Activated B cell treated with CpG ODN at 0.5 μM for 24 hours (primary cell): ENCODE measurements at regions of chr7 and their contacts with region 1.

Region 1: DNA sequence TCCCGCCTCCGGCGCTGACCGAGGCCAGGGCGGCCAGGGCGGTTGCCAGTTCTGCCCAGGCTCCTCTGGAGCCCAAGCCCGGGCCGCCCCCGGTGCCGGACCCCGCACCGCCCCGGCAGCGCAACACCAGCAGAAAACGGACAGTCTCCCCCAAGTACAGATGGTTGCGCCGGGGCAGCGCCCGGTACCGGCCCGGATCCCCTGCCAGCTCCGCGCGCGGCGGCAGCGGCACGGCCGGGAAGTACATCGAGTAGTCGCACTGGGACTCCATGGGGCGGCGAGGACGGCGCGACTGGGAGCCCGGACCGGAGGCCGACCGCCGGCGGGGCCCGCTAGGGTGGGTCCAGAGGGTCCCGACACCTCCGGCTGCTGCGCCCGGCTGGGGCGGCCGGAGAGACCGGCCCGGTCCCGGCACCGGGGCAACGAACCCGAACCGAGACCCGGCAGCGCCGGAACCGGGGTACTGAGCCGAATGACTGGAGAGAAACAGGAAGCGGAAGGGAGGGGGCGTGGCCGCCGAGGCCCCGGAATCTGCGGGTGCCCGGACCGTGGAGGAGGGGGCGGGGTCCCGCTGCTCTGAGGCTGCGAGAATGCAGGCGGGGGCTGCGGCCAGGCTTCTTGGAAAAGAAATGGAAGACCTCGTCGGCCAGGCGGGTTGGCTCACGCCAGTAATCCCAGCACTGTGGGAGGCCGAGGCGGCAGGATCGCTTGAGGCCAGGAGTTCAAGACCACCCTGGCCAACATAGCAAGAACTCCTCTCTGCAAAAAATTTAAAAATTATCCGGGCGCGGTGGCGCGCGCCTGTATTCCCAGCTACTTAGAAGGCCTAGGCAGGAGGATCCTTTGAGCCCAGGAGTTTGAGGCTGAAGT is at the start of gene TRAPPC14:
- DNase-seq: peak; percentile 93
- ATAC-seq: peak; percentile 89
- H3K4me3 Mint-ChIP-seq: peak within 1 kb of the TSS; percentile 85
- H3K27ac Mint-ChIP-seq: peak within 1 kb of the TSS; percentile 86
- H3K4me1 Mint-ChIP-seq: peaks cover 44% of the 10 kb centered on the region
- H3K27me3 Mint-ChIP-seq: no peaks in the 10 kb centered on the region
- CTCF ChIP-seq: no peak
- total RNA-seq, gene TRAPPC14: 55.7 and 65.3 TPM in 2 replicates

Region 2: DNA sequence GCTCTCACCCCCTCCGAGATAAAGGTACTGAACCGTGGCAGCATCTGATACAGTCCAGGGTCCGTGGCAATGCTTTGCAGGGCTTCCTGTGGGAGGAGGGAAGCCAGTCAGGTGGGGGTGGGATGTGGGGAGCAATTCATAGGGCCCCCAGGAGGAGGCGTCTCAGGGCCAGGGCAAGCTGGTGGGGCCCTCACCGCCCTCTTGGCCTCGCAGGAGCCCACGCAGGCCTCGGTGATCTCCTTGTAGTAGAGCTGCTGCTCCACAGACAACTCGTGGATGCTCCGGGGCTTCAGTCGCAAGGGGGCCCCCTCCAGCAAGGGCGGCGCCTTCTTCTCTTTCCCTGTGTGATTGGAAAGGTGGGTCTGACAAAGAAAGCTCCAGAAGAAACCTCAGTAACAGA is 46.5 kb before region 1 on chr7:
- CTCF ChIA-PET with region 1: no interaction called
- POLR2A ChIA-PET with region 1: no interaction called
- intact Hi-C with region 1: no loop called
- DNase-seq: no peak
- ATAC-seq: no peak
- H3K4me3 Mint-ChIP-seq: no peak overlapping the region
- H3K27ac Mint-ChIP-seq: no peak overlapping the region
- H3K4me1 Mint-ChIP-seq: peaks cover 3% of the 10 kb centered on the region
- H3K27me3 Mint-ChIP-seq: no peaks in the 10 kb centered on the region
- CTCF ChIP-seq: no peak

Region 3: GRCh38 chr7:100137851-100138760 is 20.4 kb before region 1 on chr7:
- CTCF ChIA-PET with region 1: interaction called, 3 read pairs
- POLR2A ChIA-PET with region 1: interaction called, 9 read pairs
- intact Hi-C with region 1: loop called (anchors 2 kb)
- DNase-seq: no peak
- ATAC-seq: peak; percentile 81
- H3K4me3 Mint-ChIP-seq: peak overlapping the region; percentile 32
- H3K27ac Mint-ChIP-seq: peak overlapping the region; percentile 68
- H3K4me1 Mint-ChIP-seq: peaks cover 25% of the 10 kb centered on the region
- H3K27me3 Mint-ChIP-seq: no peaks in the 10 kb centered on the region
- CTCF ChIP-seq: no peak